ENCODE measurements at regions of chr10 and their contacts with region 1.

Region 1: GRCh38 chr10:100518761-100519241 is 860 bp downstream of the SEC31B start:
- DNase-seq: peak; percentile 71

Region 2: GRCh38 chr10:100433253-100434240 is 85.3 kb before region 1 on chr10:
- CTCF ChIA-PET with region 1: interaction called, 19 read pairs
- POLR2A ChIA-PET with region 1: no interaction called
- DNase-seq: peak; percentile 90

Region 3: GRCh38 chr10:100481462-100482081 is 37.2 kb before region 1 on chr10:
- CTCF ChIA-PET with region 1: interaction called, 14 read pairs
- POLR2A ChIA-PET with region 1: interaction called, 3 read pairs
- DNase-seq: peak; percentile 94

Region 4: DNA sequence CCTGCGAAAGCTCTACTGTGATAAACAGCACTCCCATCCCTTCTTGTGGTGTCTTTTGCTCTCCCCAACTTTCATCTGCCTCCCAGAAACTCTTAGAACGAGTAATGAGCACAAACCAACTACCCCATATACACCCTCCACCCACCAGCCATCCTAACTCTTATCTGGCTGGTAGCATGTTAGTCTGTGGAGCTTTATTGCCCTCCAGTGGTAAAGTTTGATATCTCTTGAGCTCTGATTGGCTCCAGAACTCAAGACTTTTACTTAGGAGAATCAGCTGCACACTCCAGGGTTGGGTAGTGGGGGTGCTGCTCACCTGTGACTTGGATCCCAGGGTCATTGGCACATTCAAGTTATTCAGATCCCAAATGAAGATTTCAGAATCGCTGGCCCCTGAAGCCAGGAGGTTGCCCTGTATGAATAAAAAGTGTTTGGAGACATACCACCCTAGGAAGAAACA is 10.1 kb before region 1 on chr10:
- CTCF ChIA-PET with region 1: interaction called, 10 read pairs
- POLR2A ChIA-PET with region 1: no interaction called
- DNase-seq: peak; percentile 74